IMR-90 (cell line): ENCODE measurements at regions of chr2 and their contacts with region 1.

Region 1: GRCh38 chr2:84800194-84800805 is 80.6 kb downstream of the TRABD2A start:
- DNase-seq: no peak
- ATAC-seq: no peak
- H3K4me3 ChIP-seq: no peak overlapping the region
- H3K27ac ChIP-seq: no peak overlapping the region
- H3K4me1 ChIP-seq: no peaks in the 10 kb centered on the region
- H3K27me3 ChIP-seq: no peaks in the 10 kb centered on the region
- CTCF ChIP-seq: no peak
- POLR2A ChIP-seq: no peak
- RAD21 ChIP-seq: no peak

Region 2: DNA sequence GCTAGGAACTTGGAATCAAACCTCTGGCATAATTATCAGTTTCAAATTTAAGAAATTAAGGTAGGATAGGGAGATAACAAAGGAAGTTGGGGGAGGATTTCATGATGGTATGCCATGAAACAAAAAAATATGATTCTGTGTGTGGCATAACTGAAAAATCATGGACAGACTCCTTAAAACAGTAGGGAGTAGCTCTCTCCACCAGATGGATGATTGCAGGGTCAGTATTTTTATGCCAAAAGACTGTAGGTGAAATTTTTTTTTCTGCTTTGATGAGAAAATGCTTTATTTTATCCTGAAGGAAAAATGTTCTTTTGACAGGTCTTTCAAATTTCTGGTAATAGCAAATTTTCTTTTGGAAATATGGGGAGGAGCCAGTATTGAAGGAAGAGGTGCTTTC is 13.7 kb before region 1 on chr2:
- CTCF ChIA-PET with region 1: interaction called, 6 read pairs
- POLR2A ChIA-PET with region 1: interaction called, 10 read pairs
- dilution Hi-C with region 1: no loop called
- in situ Hi-C with region 1: no loop called
- intact Hi-C with region 1: no loop called
- DNase-seq: no peak
- ATAC-seq: no peak
- H3K4me3 ChIP-seq: no peak overlapping the region
- H3K27ac ChIP-seq: no peak overlapping the region
- H3K4me1 ChIP-seq: 0 out of 2 replicates have a peak, but pooled peaks cover 2% of the 10 kb centered on the region
- H3K27me3 ChIP-seq: no peaks in the 10 kb centered on the region
- CTCF ChIP-seq: no peak
- POLR2A ChIP-seq: no peak
- RAD21 ChIP-seq: no peak

Region 3: GRCh38 chr2:84989422-84989821 is 189.1 kb after region 1 on chr2:
- CTCF ChIA-PET with region 1: no interaction called
- POLR2A ChIA-PET with region 1: no interaction called
- dilution Hi-C with region 1: no loop called
- in situ Hi-C with region 1: no loop called
- intact Hi-C with region 1: no loop called
- DNase-seq: no peak
- ATAC-seq: no peak
- H3K4me3 ChIP-seq: no peak overlapping the region
- H3K27ac ChIP-seq: peak overlapping the region; percentile 7; the same call in 1 of the 2 replicates
- H3K4me1 ChIP-seq: peaks cover 29% of the 10 kb centered on the region
- H3K27me3 ChIP-seq: no peaks in the 10 kb centered on the region
- CTCF ChIP-seq: no peak
- POLR2A ChIP-seq: no peak
- RAD21 ChIP-seq: no peak

Region 4: GRCh38 chr2:85164145-85164569 is 363.9 kb after region 1 on chr2:
- CTCF ChIA-PET with region 1: no interaction called
- POLR2A ChIA-PET with region 1: no interaction called
- dilution Hi-C with region 1: no loop called
- in situ Hi-C with region 1: no loop called
- intact Hi-C with region 1: no loop called
- DNase-seq: no peak
- ATAC-seq: no peak
- H3K4me3 ChIP-seq: no peak overlapping the region
- H3K27ac ChIP-seq: no peak overlapping the region
- H3K4me1 ChIP-seq: peaks cover 27% of the 10 kb centered on the region
- H3K27me3 ChIP-seq: no peaks in the 10 kb centered on the region
- CTCF ChIP-seq: no peak
- POLR2A ChIP-seq: no peak
- RAD21 ChIP-seq: no peak